Activated CD8-positive, alpha-beta T cell treated with anti-CD3 and anti-CD28 coated beads, Interleukin-2, amount 10 ng/mL, durations not matched to agents 7 days and 5 days (primary cell): ENCODE measurements at regions of chr7 and their contacts with region 1.

Region 1: DNA sequence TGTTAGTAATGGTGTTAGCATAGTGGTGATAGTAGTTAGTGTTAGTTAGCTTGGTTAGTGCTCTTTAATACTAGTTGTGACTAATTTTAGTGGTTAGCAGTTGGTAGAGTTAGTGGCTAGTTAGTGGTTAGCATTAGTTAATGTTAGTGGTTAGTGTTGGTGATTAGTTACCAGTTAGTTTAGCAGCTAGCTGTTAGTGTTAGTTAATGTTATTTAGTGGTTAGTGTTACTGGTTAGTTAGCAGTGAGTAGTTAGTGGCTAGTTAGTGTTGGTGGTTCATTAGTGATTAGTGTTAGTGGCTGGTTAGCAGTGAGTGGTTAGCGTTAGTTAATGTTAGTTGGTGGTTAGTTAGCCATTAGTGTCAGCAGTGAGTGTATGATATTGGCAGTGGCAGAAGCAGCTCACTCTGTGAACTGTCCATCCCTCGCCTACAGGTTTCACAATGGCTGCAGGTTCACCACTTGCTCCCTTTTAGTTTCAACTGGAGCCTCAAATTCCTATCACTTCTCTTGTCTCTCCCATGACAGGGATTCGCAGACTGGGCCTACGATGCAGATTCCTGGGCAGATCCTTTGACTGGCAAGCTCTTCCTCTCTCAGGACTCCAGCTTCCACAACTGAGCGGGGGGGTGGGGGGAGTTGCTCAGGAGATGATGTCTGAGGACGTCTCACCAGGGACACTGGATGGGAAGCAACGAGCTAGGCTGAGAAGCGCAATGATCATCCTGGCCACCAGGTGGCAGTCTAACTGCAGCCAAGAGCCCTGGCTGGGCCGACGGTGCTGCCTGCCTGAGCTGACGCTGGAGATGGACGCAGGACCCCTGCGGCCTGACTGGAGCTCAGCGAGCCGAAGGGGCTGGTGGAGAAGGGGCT is 19.5 kb downstream of the GHRHR start:
- DNase-seq: peak; percentile 84
- ATAC-seq: peak; percentile 89
- H3K4me3 Mint-ChIP-seq: no peak overlapping the region
- H3K27ac Mint-ChIP-seq: no peak overlapping the region
- H3K4me1 Mint-ChIP-seq: peaks cover 15% of the 10 kb centered on the region
- H3K27me3 Mint-ChIP-seq: peaks cover 30% of the 10 kb centered on the region

Region 2: GRCh38 chr7:30968747-30969603 is 14.3 kb before region 1 on chr7:
- CTCF ChIA-PET with region 1: interaction called, 13 read pairs
- POLR2A ChIA-PET with region 1: no interaction called
- DNase-seq: no peak
- ATAC-seq: no peak
- H3K4me3 Mint-ChIP-seq: no peak overlapping the region
- H3K27ac Mint-ChIP-seq: no peak overlapping the region
- H3K4me1 Mint-ChIP-seq: peaks cover 2% of the 10 kb centered on the region
- H3K27me3 Mint-ChIP-seq: peaks cover 18% of the 10 kb centered on the region

Region 3: DNA sequence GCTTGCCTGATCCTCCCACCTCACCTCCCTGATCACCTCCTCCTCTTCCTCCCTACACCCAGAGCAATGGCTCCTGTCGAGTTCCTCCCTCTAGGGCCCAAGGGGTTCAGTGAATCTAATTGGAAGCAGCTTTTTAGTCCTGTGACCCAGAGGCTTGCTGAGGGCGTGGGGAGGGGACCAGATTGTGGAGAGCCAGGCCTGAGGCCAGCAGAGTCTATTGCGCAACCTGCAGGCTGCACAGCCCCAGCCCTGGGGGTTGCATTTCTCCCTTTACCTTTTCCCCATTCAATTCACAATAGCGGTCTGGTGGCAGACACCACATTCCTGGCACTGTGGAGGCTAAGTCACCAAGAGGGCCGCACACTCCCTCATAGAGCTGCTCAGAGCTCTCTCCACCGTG is 13.0 kb after region 1 on chr7:
- CTCF ChIA-PET with region 1: interaction called, 20 read pairs
- POLR2A ChIA-PET with region 1: no interaction called
- DNase-seq: no peak
- ATAC-seq: no peak
- H3K4me3 Mint-ChIP-seq: no peak overlapping the region
- H3K27ac Mint-ChIP-seq: no peak overlapping the region
- H3K4me1 Mint-ChIP-seq: no peaks in the 10 kb centered on the region
- H3K27me3 Mint-ChIP-seq: no peaks in the 10 kb centered on the region

Region 4: DNA sequence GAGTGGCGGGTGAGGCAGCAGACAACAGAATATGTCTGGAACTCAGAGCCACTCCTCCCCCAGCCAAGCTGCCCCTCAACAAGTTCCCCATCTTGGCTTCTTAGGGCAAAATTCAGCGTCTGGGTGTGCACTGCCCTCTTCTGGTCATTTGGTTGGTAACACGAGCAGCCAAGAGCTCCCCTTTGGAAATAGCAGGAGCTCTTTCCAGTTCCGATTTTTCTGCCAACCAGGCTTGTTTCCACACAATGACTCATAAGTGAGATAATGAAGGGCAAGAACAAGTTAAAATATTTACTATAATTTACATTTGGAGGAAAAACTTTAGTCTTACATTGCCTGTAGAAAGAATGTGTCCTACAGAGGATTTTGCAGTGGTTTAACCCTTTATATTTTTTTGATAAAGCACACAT is 139.4 kb after region 1 on chr7:
- CTCF ChIA-PET with region 1: interaction called, 265 read pairs
- POLR2A ChIA-PET with region 1: no interaction called
- DNase-seq: peak; percentile 60
- ATAC-seq: no peak
- H3K4me3 Mint-ChIP-seq: no peak overlapping the region
- H3K27ac Mint-ChIP-seq: no peak overlapping the region
- H3K4me1 Mint-ChIP-seq: no peaks in the 10 kb centered on the region
- H3K27me3 Mint-ChIP-seq: peaks cover 12% of the 10 kb centered on the region

Region 5: GRCh38 chr7:31134246-31135188 is 151.2 kb after region 1 on chr7:
- CTCF ChIA-PET with region 1: interaction called, 25 read pairs
- POLR2A ChIA-PET with region 1: interaction called, 3 read pairs
- DNase-seq: peak; percentile 64
- ATAC-seq: peak; percentile 78
- H3K4me3 Mint-ChIP-seq: no peak overlapping the region
- H3K27ac Mint-ChIP-seq: no peak overlapping the region
- H3K4me1 Mint-ChIP-seq: peaks cover 2% of the 10 kb centered on the region
- H3K27me3 Mint-ChIP-seq: peaks cover 2% of the 10 kb centered on the region